Activated CD4-positive, alpha-beta T cell treated with anti-CD3 and anti-CD28 coated beads for 36 hours (primary cell): ENCODE measurements at regions of chr2 and their contacts with region 1.

Region 1: GRCh38 chr2:202265467-202266277 is at the start of gene NOP58:
- DNase-seq: peak; percentile 95
- ATAC-seq: peak; percentile 84
- H3K4me3 Mint-ChIP-seq: no peak within 1 kb of the TSS
- H3K27ac Mint-ChIP-seq: peak within 1 kb of the TSS; percentile 78
- H3K4me1 Mint-ChIP-seq: peaks cover 15% of the 10 kb centered on the region
- H3K27me3 Mint-ChIP-seq: no peaks in the 10 kb centered on the region
- total RNA-seq, gene NOP58: 160 to 180 TPM

Region 2: GRCh38 chr2:201451292-201452057 is 814.2 kb before region 1 on chr2 and contains the starts of genes STRADB and TRAK2:
- CTCF ChIA-PET with region 1: no interaction called
- POLR2A ChIA-PET with region 1: no interaction called
- intact Hi-C with region 1: loop called in 1 of 2 experiments (anchors 5 kb)
- DNase-seq: peak; percentile 98
- ATAC-seq: peak; percentile 91
- H3K4me3 Mint-ChIP-seq: peak within 1 kb of the TSS; percentile 95
- H3K27ac Mint-ChIP-seq: peak within 1 kb of the TSS; percentile 97
- H3K4me1 Mint-ChIP-seq: peaks cover 44% of the 10 kb centered on the region
- H3K27me3 Mint-ChIP-seq: no peaks in the 10 kb centered on the region
- total RNA-seq, gene STRADB: 20.5 to 21.8 TPM
- total RNA-seq, gene TRAK2: 22.5 to 25.6 TPM

Region 3: DNA sequence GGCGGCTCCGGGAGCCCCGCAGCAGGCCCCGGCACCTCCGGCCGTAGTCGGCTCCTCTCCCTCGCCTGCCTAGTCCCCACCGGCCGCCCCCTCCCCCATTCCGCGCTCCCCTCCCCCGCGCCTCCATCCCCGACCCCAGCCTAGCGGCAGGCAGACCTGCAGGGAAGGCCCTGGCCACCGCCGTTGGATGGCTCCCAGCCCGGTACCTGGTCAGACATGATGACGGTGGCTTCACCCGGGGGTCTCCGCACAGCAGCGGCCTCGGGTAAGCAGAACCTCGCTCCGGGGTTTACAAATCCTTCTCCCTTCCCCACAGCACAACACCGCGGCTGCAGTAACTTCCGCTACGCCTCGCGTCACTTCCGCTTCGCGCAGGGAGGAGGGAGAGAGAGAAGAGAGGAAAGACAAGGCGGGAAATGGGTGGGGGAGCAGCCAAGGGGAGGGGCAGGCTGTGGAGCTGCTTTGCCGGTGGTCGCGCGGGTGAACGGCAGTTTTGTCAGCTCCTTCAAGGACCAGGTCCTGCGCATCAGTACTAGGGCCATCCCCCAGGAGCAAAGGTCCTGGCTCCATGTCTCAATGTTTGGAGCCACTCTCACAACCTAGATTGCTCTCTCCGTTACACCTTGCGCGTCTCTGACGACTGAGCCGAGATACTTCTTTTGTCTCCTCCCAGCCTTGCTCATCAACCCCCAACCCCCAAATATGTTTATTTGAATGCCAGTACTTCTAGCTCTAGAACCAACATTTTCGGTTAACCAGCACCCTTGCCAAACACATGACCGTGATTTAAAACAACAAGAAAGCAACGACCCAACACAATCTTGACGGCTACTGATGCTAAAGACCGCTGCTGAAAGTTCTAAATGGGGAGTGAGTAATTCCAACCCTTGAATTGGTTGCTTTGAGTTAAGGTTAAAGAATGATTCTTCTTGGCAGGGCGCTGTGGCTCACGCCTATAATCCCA is 27.2 kb before region 1 on chr2 and contains the start of gene SUMO1:
- CTCF ChIA-PET with region 1: no interaction called
- POLR2A ChIA-PET with region 1: interaction called, 8 read pairs
- intact Hi-C with region 1: loop called (anchors 1 kb)
- DNase-seq: peak; percentile 95
- ATAC-seq: peak; percentile 93
- H3K4me3 Mint-ChIP-seq: peak within 1 kb of the TSS; percentile 98
- H3K27ac Mint-ChIP-seq: peak within 1 kb of the TSS; percentile 97
- H3K4me1 Mint-ChIP-seq: peaks cover 28% of the 10 kb centered on the region
- H3K27me3 Mint-ChIP-seq: no peaks in the 10 kb centered on the region
- total RNA-seq, gene SUMO1: 132 to 164 TPM

Region 4: DNA sequence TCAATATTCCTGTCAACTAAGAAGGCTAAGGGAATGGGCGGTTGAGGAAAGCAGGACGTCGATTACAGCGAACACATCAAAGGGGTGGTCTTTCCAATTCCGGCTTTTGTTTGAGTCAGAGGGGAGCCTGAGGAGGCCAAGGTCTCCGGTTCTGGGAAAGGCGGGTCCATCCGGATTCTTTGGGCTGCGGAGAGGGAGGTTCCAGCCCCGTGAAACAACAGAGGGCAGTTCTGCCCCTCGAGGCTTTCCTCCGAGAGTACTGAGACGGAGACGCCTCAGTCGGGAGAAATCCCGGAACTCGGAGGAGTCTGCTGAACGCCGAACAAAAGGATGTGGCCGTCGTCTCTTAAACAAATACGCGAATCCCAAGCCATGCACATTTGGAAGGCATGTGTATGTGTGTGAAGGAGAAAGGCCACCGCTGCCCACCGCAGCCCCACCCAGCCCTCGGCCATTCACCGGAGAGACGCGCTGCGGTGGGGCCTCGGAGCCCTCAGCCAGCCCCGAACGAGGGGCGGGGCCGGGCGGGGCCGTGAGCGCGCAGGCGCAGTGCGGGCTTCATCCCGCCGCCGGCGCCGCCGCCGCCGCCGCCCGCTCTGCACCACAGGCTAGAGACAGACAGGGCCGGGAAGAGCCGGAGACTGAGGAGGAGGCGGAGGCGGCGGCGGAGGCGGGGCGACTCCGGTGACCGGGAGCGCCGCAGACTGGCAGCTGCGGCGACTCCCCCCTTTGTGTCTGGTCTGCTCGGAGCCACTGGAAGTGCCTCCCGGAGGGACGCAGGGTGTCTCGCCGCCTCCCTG is 110.1 kb after region 1 on chr2 and contains the start of gene BMPR2:
- CTCF ChIA-PET with region 1: no interaction called
- POLR2A ChIA-PET with region 1: no interaction called
- intact Hi-C with region 1: loop called (anchors 1 kb)
- DNase-seq: peak; percentile 90
- ATAC-seq: peak; percentile 86
- H3K4me3 Mint-ChIP-seq: peak within 1 kb of the TSS; percentile 95
- H3K27ac Mint-ChIP-seq: peak within 1 kb of the TSS; percentile 94
- H3K4me1 Mint-ChIP-seq: peaks cover 23% of the 10 kb centered on the region
- H3K27me3 Mint-ChIP-seq: no peaks in the 10 kb centered on the region
- total RNA-seq, gene BMPR2: 7.6 to 10.8 TPM

Region 5: DNA sequence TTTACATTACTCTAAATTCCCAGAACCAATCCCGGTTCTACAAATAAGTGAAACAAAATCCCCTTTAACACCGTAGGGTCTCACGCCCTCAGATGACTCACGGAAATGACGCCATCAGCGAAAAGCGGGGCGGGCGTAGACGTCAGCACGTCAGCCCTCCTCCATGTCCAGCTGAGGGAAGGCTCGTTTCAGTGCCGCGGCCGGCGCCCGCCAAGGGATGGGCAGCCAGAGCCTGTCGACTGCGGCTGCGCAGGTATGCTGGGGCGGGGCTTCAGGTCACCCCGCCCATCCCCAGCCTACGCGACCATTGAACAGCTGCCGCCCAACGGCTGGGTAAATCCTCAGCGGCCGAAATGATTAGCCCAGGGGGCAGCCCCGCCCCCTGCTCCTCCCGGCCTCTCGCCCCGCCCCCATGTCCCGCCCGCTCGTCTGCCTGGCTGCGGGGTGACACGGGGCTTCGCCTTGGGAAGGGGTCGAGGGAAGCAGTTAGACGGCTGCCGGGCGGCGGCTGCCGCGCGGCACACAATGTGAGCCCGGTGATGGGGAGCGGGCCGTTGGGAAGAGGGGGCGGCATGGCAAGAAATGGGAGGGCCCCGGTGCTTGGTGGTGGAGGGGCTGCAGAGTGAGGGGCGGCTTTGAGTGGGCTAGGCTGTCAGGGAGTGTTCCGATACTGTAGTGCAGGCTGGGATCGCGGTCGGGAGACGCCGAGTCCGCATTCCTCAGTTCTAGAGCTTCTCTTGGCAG is 749.0 kb after region 1 on chr2 and contains the start of gene NBEAL1:
- CTCF ChIA-PET with region 1: no interaction called
- POLR2A ChIA-PET with region 1: no interaction called
- intact Hi-C with region 1: loop called in 1 of 2 experiments (anchors 1 kb)
- DNase-seq: peak; percentile 98
- ATAC-seq: peak; percentile 96
- H3K4me3 Mint-ChIP-seq: peak within 1 kb of the TSS; percentile 93
- H3K27ac Mint-ChIP-seq: peak within 1 kb of the TSS; percentile 89
- H3K4me1 Mint-ChIP-seq: peaks cover 32% of the 10 kb centered on the region
- H3K27me3 Mint-ChIP-seq: no peaks in the 10 kb centered on the region
- total RNA-seq, gene NBEAL1: 8.2 to 13.0 TPM